Caco-2 (cell line): ENCODE measurements at regions of chr19 and their contacts with region 1.

Region 1: GRCh38 chr19:57841122-57841763 is 8.4 kb upstream of the ZNF587 start:
- DNase-seq: peak in 1 of 2 experiments; percentile 44
- H3K4me3 ChIP-seq: no peak overlapping the region
- H3K4me3 Mint-ChIP-seq: peak overlapping the region; percentile 43
- H3K27ac Mint-ChIP-seq: peak overlapping the region; percentile 93
- H3K4me1 ChIP-seq: peaks cover 12% of the 10 kb centered on the region; the same call in 1 of the 2 replicates
- H3K4me1 Mint-ChIP-seq: peaks cover 22% of the 10 kb centered on the region
- H3K27me3 ChIP-seq: no peaks in the 10 kb centered on the region
- H3K27me3 Mint-ChIP-seq: no peaks in the 10 kb centered on the region
- CTCF ChIP-seq: no peak

Region 2: GRCh38 chr19:57746580-57747471 is 94.4 kb before region 1 on chr19 and contains the start of gene ZNF776:
- CTCF ChIA-PET with region 1: no interaction called
- POLR2A ChIA-PET with region 1: no interaction called
- intact Hi-C with region 1: loop called (anchors 5 kb)
- DNase-seq: peak; percentile 86 to 89
- H3K4me3 ChIP-seq: peak within 1 kb of the TSS; percentile 100
- H3K4me3 Mint-ChIP-seq: peak within 1 kb of the TSS; percentile 100
- H3K27ac Mint-ChIP-seq: peak within 1 kb of the TSS; percentile 99
- H3K4me1 ChIP-seq: peaks cover 4% of the 10 kb centered on the region; the same call in 1 of the 2 replicates
- H3K4me1 Mint-ChIP-seq: peaks cover 12% of the 10 kb centered on the region
- H3K27me3 ChIP-seq: no peaks in the 10 kb centered on the region
- H3K27me3 Mint-ChIP-seq: no peaks in the 10 kb centered on the region
- CTCF ChIP-seq: no peak
- total RNA-seq, gene ZNF776: 15.6 and 16.0 TPM in 2 replicates

Region 3: GRCh38 chr19:57829316-57829715 is 11.9 kb before region 1 on chr19:
- CTCF ChIA-PET with region 1: interaction called, 4 read pairs
- POLR2A ChIA-PET with region 1: no interaction called
- intact Hi-C with region 1: loop called (anchors 1 kb)
- DNase-seq: no peak
- H3K4me3 ChIP-seq: no peak overlapping the region
- H3K4me3 Mint-ChIP-seq: peak overlapping the region; percentile 34
- H3K27ac Mint-ChIP-seq: peak overlapping the region; percentile 77
- H3K4me1 ChIP-seq: peaks cover 45% of the 10 kb centered on the region
- H3K4me1 Mint-ChIP-seq: peaks cover 39% of the 10 kb centered on the region
- H3K27me3 ChIP-seq: no peaks in the 10 kb centered on the region
- H3K27me3 Mint-ChIP-seq: no peaks in the 10 kb centered on the region
- CTCF ChIP-seq: no peak